Activated T-helper 2 cell treated with anti-CD3 and anti-CD28 coated beads, Interferon-gamma antibody, Interleukin-2, Interleukin-4, amounts not matched to agents 10 μg/mL and 5 μg/mL and 100 μg/mL, durations not matched to agents 14 hours and 24 hours and 36 hours (primary cell): ENCODE measurements at regions of chr9 and their contacts with region 1.

Region 1: DNA sequence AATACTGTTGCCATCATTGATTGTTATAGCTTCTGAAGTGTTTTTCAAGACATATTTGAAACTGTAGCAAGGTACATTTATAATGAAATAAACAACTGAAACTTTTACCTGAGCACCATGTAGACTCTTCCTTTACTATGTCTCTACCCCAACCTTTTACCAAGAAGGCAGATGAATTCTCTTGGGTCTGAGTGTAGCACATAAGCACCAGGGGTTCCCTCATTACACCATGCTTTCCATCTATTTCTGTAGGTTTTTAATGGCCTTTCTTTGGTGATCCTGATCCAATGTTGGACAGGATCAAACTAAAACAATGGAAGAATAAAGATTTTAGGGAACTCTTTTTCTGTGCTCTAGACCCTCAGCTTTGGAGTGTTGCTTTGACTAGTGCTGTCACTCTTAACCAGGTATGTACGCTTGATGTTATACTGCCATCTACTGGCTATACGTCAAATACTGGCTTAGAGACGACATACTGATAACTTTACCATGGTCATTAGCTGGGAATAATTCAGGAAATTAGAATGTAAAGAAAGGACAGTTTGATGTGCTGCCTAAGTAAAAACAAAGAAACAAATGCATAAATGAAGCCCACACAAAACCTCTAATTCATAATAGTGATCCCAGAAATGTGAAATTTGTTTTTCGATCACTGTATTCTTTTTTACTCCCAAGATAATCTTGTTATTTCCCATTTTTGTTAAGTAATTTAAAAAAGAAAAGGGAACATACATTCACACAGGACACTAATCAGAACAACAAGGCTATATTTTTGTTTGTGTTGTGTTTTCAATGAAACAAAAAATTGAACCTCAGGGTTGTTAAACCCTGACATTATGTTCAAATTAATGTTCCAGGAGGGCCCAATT is 30.7 kb downstream of the IFNW1 start:
- DNase-seq: no peak
- H3K4me3 Mint-ChIP-seq: no peak overlapping the region
- H3K27ac Mint-ChIP-seq: no peak overlapping the region
- H3K4me1 Mint-ChIP-seq: no peaks in the 10 kb centered on the region
- H3K27me3 Mint-ChIP-seq: peaks cover 27% of the 10 kb centered on the region

Region 2: DNA sequence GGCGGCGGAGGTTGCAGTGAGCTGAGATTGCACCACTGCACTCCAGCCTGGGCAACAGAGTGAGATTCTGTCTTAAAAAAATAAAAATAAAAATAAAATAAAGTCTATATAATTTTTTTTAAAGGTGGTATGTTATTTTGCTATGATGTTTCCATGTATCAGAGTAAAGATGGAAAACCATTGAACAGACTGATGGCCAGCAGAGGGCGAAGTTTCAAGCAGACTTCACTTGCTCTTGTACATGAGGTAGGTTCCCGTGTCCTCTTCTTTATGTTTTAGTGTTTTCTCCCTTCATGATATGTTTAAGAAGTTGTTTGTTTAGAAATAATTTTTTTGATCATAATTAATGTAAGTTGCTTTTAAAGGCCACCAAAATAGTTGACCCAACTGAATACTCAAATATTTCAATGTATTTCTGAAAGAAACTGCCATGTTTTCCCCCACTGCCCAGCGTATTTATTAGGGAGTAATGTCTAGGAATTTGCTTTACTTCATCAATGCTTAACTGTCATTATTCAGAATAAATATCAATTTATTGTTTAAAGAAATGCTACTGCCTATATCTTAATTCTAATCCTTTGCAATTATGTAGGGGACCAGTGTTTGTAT is 225.9 kb before region 1 on chr9:
- intact Hi-C with region 1: loop called (anchors 2 kb)
- DNase-seq: peak; percentile 28
- H3K4me3 Mint-ChIP-seq: no peak overlapping the region
- H3K27ac Mint-ChIP-seq: no peak overlapping the region
- H3K4me1 Mint-ChIP-seq: peaks cover 3% of the 10 kb centered on the region
- H3K27me3 Mint-ChIP-seq: no peaks in the 10 kb centered on the region

Region 3: GRCh38 chr9:20941174-20941690 is 169.7 kb before region 1 on chr9:
- intact Hi-C with region 1: loop called (anchors 2 kb)
- DNase-seq: peak; percentile 40
- H3K4me3 Mint-ChIP-seq: no peak overlapping the region
- H3K27ac Mint-ChIP-seq: no peak overlapping the region
- H3K4me1 Mint-ChIP-seq: peaks cover 3% of the 10 kb centered on the region
- H3K27me3 Mint-ChIP-seq: no peaks in the 10 kb centered on the region

Region 4: DNA sequence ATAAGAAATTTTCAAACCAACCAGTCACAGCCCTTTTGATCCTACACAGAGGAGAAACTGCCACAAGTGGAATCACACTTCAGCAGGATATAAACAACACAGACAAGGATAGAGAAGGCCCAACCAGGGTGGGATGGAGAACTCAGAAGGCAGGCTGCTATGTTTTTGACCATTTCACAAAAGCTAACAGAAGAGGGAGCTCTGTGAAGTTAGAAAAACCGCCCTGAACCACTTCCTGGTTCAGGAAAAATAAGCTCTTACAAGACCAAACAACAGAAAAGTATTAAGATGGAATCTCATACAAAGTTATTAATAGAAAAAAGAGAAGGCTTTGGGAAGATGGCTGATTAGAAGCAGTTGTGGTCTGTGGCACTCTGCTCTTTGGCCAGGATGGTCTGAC is 32.2 kb before region 1 on chr9:
- intact Hi-C with region 1: loop called (anchors 5 kb)
- DNase-seq: no peak
- H3K4me3 Mint-ChIP-seq: no peak overlapping the region
- H3K27ac Mint-ChIP-seq: peak overlapping the region; percentile 7
- H3K4me1 Mint-ChIP-seq: peaks cover 27% of the 10 kb centered on the region
- H3K27me3 Mint-ChIP-seq: peaks cover 22% of the 10 kb centered on the region